Tibial artery (tissue), 4 donors: ENCODE measurements at regions of chr3 and their contacts with region 1.

Region 1: DNA sequence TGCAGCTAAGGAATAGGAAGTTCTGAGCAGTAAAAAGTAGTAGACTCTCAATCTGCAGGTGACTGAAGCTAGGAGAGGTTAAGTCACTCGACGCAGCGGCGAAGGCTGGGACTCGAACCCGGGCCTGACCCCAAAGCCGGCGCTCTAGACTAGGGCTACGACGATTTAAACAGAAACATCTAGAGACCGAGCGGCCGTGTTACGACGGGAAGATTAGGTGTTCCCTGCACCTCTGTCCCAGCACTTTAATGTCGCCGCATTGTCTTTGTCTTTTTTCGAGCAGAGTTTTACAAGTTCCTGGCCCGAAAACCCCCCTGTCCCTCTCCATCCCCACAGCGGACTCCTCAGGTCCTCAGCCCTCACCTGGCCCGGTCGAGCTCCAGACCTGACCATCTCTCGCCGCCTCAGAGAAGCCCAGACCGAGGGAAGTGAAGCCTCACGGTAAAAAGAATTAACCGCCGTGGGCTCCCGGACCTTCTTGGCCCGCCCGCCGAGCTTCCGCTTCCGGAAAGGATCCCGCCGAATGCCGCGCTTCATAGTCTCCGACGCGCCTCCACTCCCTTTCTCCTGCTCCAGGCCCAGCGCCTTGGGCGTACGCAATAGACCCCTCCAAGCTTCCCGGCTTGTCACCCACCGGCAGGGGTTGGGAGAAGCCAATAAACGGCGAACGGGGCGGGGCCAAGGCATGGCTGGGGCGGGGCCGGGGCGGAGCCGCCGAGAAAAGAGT is at the start of gene CCDC14:
- DNase-seq: peak; percentile 94 to 97
- H3K4me3 ChIP-seq: peak within 1 kb of the TSS; percentile 71 to 88
- H3K27ac ChIP-seq: peak within 1 kb of the TSS; percentile 83 to 88
- H3K4me1 ChIP-seq: peaks cover 0 to 29% (median 6%) of the 10 kb centered on the region in 4 donors
- H3K27me3 ChIP-seq: no peaks in the 10 kb centered on the region
- CTCF ChIP-seq: no peak

Region 2: GRCh38 chr3:123229145-123229544 is 731.8 kb before region 1 on chr3:
- intact Hi-C with region 1: no loop called
- DNase-seq: no peak
- H3K4me3 ChIP-seq: no peak overlapping the region
- H3K27ac ChIP-seq: no peak overlapping the region
- H3K4me1 ChIP-seq: no peaks in the 10 kb centered on the region
- H3K27me3 ChIP-seq: no peaks in the 10 kb centered on the region
- CTCF ChIP-seq: no peak

Region 3: GRCh38 chr3:123745184-123745855 is 215.6 kb before region 1 on chr3:
- intact Hi-C with region 1: loop called (anchors 10 kb)
- DNase-seq: no peak
- H3K4me3 ChIP-seq: no peak overlapping the region
- H3K27ac ChIP-seq: no peak overlapping the region
- H3K4me1 ChIP-seq: peaks cover 0 to 36% (median 8%) of the 10 kb centered on the region in 4 donors
- H3K27me3 ChIP-seq: no peaks in the 10 kb centered on the region
- CTCF ChIP-seq: peak; percentile 17 to 34

Region 4: DNA sequence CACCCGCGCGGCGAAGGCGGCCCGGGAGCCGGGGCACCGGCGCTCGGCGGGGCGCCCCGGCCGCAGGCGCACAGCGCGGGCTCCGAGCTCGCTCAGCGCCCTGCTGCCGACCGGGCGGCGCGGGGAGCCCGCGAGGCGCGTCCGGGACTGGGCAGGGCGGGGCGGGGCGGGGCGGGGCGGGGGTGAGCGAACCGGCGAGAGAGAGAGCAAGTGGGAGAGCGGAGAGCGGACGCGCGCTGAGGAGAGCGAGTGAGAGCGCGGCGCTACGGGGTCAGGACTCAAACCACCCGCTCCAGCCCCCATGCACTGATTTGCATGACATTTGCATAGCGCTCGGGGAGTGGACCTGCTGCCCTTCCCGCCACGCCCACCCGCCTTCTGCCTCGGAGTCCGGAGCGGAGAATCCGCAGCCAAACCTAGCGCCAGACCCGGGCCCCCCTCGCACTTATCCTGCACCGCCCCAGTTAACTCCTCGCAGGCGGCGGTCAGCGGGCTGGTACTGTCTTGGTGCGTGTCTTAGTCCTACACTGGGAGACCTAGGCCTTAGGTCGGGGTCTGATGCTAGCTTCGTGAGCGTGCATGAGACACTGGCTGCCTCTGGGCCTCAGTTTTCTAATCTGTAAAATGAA is 76.6 kb before region 1 on chr3 and contains the start of gene MYLK:
- intact Hi-C with region 1: no loop called
- DNase-seq: peak; percentile 74 to 91
- H3K4me3 ChIP-seq: peak within 1 kb of the TSS; percentile 73 to 79
- H3K27ac ChIP-seq: peak within 1 kb of the TSS; percentile 78 to 83
- H3K4me1 ChIP-seq: peaks cover 0 to 31% (median 13%) of the 10 kb centered on the region in 4 donors
- H3K27me3 ChIP-seq: no peaks in the 10 kb centered on the region
- CTCF ChIP-seq: no peak